A549 (cell line): ENCODE measurements at regions of chr1 and their contacts with region 1.

Region 1: GRCh38 chr1:178532392-178532791 is 19.5 kb downstream of the TEX35 start:
- DNase-seq: peak; percentile 80 to 94
- ATAC-seq: peak; percentile 71 to 90
- H3K4me3 ChIP-seq: no peak overlapping the region
- H3K27ac ChIP-seq: peak overlapping the region; percentile 27 to 68; a peak in 4 of 6 replicates
- H3K4me1 ChIP-seq: peaks cover 29% of the 10 kb centered on the region
- CTCF ChIP-seq: peak; percentile 92
- EP300 ChIP-seq: no peak
- POLR2A ChIP-seq: no peak
- RAD21 ChIP-seq: peak; percentile 92 to 96

Region 2: DNA sequence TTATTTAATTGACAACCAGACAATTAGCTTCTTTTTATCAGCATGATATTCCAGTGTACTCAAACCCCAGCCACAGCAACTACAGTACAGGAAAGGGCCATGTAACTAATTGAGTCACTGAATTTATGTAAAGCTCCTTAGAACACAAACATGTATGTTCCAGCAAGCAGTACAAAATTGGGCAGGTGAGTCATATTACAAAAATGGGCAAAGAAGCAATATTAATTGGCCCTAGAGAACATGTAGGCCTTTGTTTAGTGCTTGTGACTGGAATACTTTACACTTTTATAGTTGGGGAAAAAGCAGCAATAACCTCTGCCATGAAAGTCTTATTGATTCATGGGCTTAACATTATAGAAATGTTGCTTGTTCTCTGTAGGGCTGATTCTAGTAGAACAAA is 67.4 kb before region 1 on chr1:
- CTCF ChIA-PET with region 1: no interaction called
- POLR2A ChIA-PET with region 1: no interaction called
- DNase-seq: no peak
- ATAC-seq: no peak
- H3K4me3 ChIP-seq: no peak overlapping the region
- H3K27ac ChIP-seq: no peak overlapping the region
- H3K4me1 ChIP-seq: no peaks in the 10 kb centered on the region
- CTCF ChIP-seq: no peak
- EP300 ChIP-seq: no peak
- POLR2A ChIP-seq: no peak
- RAD21 ChIP-seq: no peak

Region 3: DNA sequence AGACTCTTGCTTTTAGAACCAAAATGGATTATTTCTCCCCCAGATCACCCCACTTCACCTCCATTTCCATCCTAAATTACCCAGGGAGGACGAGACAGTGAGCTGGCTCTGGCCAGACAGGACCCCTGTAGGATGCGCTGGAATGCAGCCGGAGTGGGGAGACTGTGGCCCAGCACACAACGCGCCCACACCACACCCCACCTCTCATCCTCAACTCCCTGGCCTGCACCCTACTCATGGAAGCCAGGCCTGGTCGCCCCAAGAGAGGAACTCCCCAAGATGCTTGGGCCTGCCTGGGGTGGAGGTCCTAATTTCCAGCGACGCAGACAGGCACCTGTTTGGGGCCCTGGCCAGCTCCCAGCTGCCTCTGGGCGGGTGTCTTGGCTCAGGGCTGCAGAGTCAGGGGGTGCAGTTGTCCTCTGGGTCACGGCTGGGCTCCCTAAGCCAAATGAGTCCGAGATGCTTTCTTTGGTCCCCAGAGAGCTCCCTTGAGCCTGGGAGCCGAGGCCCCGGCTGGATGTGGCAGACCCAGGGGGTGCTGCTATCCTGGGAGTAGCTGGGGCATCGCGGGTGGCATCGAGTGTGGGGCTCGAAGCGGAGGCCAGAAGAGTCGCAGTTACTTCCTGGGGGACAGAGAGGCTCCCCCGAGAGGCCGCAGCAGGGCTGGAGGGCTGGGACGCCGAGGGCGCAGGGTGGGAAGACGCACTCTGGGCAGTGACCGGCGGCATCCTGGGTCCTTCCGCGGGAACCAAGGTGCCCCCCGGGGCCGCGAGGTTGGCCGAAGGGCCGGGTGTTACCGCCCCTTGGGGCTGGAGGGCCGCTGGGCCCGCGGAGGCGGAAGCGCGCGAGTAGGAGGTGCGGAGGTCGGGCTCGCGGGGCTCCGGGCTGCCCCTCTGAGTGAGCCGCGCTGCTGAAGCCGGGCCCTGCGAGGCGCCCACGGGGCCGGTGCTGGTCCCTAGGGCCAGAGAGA is 46.0 kb before region 1 on chr1:
- CTCF ChIA-PET with region 1: no interaction called
- POLR2A ChIA-PET with region 1: no interaction called
- DNase-seq: no peak
- ATAC-seq: peak in 1 of 2 experiments; percentile 12; a peak in 1 of 6 replicates
- H3K4me3 ChIP-seq: no peak overlapping the region
- H3K27ac ChIP-seq: no peak overlapping the region
- H3K4me1 ChIP-seq: no peaks in the 10 kb centered on the region
- CTCF ChIP-seq: no peak
- EP300 ChIP-seq: no peak
- POLR2A ChIP-seq: no peak
- RAD21 ChIP-seq: no peak

Region 4: GRCh38 chr1:178520783-178521182 is 11.6 kb before region 1 on chr1:
- CTCF ChIA-PET with region 1: interaction called, 13 read pairs
- POLR2A ChIA-PET with region 1: no interaction called
- DNase-seq: no peak
- ATAC-seq: no peak
- H3K4me3 ChIP-seq: no peak overlapping the region
- H3K27ac ChIP-seq: no peak overlapping the region
- H3K4me1 ChIP-seq: no peaks in the 10 kb centered on the region
- CTCF ChIP-seq: no peak
- EP300 ChIP-seq: no peak
- POLR2A ChIP-seq: no peak
- RAD21 ChIP-seq: no peak